CD8-positive, alpha-beta T cell (primary cell): ENCODE measurements at regions of chr4 and their contacts with region 1.

Region 1: GRCh38 chr4:120156120-120156718 is 89.6 kb upstream of the MAD2L1 start:
- DNase-seq: peak in 4 of 9 experiments; percentile 17 to 80 (median 54)
- ATAC-seq: peak; percentile 46
- H3K4me3 ChIP-seq: no peak overlapping the region
- H3K4me3 Mint-ChIP-seq: no peak overlapping the region
- H3K27ac ChIP-seq: no peak overlapping the region
- H3K27ac Mint-ChIP-seq: no peak overlapping the region
- H3K4me1 ChIP-seq: no peaks in the 10 kb centered on the region
- H3K4me1 Mint-ChIP-seq: no peaks in the 10 kb centered on the region
- H3K27me3 ChIP-seq: no peaks in the 10 kb centered on the region
- H3K27me3 Mint-ChIP-seq: no peaks in the 10 kb centered on the region
- CTCF ChIP-seq: peak; percentile 74

Region 2: DNA sequence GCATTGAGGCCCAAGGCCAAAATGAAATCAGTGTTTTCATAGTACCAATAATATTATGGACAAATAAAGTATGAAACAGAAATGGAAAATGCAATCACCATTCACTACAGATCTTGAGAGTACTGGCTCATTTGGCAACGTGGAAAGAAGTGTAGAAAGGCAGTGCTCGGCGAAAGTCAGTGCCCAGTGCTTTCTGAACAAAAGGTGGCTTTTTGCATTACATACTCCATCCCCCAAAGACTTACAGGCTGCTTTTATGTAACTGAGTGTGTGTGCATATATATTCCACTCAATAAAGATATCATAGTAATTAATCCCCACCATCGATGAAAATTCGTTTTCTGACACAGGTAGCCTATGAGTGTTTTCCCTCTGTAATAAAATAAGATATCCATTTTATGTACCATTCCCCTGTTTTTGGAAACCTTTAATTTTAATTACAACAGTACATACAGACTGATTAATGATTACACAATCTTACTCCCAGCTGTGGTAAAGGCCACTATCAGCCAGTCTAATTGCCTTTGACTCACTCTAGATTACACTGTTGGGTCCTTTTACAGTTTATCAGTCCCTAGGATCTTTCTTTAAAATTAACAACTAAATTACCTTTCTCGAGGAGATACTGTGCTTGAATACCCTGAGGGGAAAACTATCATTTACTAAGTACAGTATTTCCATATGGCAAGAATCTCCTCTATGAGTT is 155.5 kb before region 1 on chr4:
- CTCF ChIA-PET with region 1: no interaction called
- POLR2A ChIA-PET with region 1: no interaction called
- intact Hi-C with region 1: no loop called
- DNase-seq: no peak
- ATAC-seq: no peak
- H3K4me3 ChIP-seq: no peak overlapping the region
- H3K4me3 Mint-ChIP-seq: no peak overlapping the region
- H3K27ac ChIP-seq: no peak overlapping the region
- H3K27ac Mint-ChIP-seq: no peak overlapping the region
- H3K4me1 ChIP-seq: no peaks in the 10 kb centered on the region
- H3K4me1 Mint-ChIP-seq: no peaks in the 10 kb centered on the region
- H3K27me3 ChIP-seq: no peaks in the 10 kb centered on the region
- H3K27me3 Mint-ChIP-seq: peaks cover 10% of the 10 kb centered on the region
- CTCF ChIP-seq: no peak

Region 3: DNA sequence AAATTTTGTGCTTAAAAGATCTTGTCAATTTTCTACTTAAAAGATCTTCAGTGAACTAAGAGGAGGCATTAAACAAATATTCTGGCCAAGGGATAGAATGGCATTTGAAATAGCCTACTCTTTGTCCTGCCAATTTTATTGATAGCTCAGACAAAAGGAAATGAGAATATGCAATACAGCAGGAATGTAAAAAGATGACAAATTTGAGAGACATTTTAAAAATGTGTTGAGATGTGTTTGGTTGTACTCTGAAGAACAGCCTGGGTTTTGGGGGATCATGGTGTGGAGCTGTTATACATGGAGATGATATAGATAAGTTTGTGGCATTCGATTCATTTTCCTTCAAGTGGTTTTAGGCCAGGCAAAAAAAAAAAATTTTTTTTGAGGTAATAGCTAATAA is 78.0 kb before region 1 on chr4:
- CTCF ChIA-PET with region 1: no interaction called
- POLR2A ChIA-PET with region 1: no interaction called
- intact Hi-C with region 1: loop called (anchors 5 kb)
- DNase-seq: no peak
- ATAC-seq: no peak
- H3K4me3 ChIP-seq: no peak overlapping the region
- H3K4me3 Mint-ChIP-seq: no peak overlapping the region
- H3K27ac ChIP-seq: no peak overlapping the region
- H3K27ac Mint-ChIP-seq: no peak overlapping the region
- H3K4me1 ChIP-seq: no peaks in the 10 kb centered on the region
- H3K4me1 Mint-ChIP-seq: no peaks in the 10 kb centered on the region
- H3K27me3 ChIP-seq: no peaks in the 10 kb centered on the region
- H3K27me3 Mint-ChIP-seq: peaks cover 3% of the 10 kb centered on the region
- CTCF ChIP-seq: no peak

Region 4: GRCh38 chr4:120175272-120175671 is 19.1 kb after region 1 on chr4:
- CTCF ChIA-PET with region 1: no interaction called
- POLR2A ChIA-PET with region 1: no interaction called
- intact Hi-C with region 1: no loop called
- DNase-seq: no peak
- ATAC-seq: no peak
- H3K4me3 ChIP-seq: no peak overlapping the region
- H3K4me3 Mint-ChIP-seq: no peak overlapping the region
- H3K27ac ChIP-seq: no peak overlapping the region
- H3K27ac Mint-ChIP-seq: no peak overlapping the region
- H3K4me1 ChIP-seq: no peaks in the 10 kb centered on the region
- H3K4me1 Mint-ChIP-seq: no peaks in the 10 kb centered on the region
- H3K27me3 ChIP-seq: no peaks in the 10 kb centered on the region
- H3K27me3 Mint-ChIP-seq: peaks cover 8% of the 10 kb centered on the region
- CTCF ChIP-seq: no peak

Region 5: GRCh38 chr4:121112530-121112929 is 956.3 kb after region 1 on chr4:
- CTCF ChIA-PET with region 1: no interaction called
- POLR2A ChIA-PET with region 1: no interaction called
- intact Hi-C with region 1: loop called in 1 of 2 experiments (anchors 5 kb)
- DNase-seq: peak in 2 of 9 experiments; percentile 6 to 26
- ATAC-seq: no peak
- H3K4me3 ChIP-seq: no peak overlapping the region
- H3K4me3 Mint-ChIP-seq: no peak overlapping the region
- H3K27ac ChIP-seq: no peak overlapping the region
- H3K27ac Mint-ChIP-seq: no peak overlapping the region
- H3K4me1 ChIP-seq: no peaks in the 10 kb centered on the region
- H3K4me1 Mint-ChIP-seq: peaks cover 13% of the 10 kb centered on the region
- H3K27me3 ChIP-seq: no peaks in the 10 kb centered on the region
- H3K27me3 Mint-ChIP-seq: no peaks in the 10 kb centered on the region
- CTCF ChIP-seq: peak; percentile 73

Region 6: GRCh38 chr4:121307445-121308327 is 1151.5 kb after region 1 on chr4:
- CTCF ChIA-PET with region 1: interaction called, 14 read pairs
- POLR2A ChIA-PET with region 1: no interaction called
- intact Hi-C with region 1: loop called (anchors 1 kb)
- DNase-seq: peak in 6 of 9 experiments; percentile 8 to 79 (median 42)
- ATAC-seq: peak; percentile 38
- H3K4me3 ChIP-seq: no peak overlapping the region
- H3K4me3 Mint-ChIP-seq: no peak overlapping the region
- H3K27ac ChIP-seq: no peak overlapping the region
- H3K27ac Mint-ChIP-seq: peak overlapping the region; percentile 38
- H3K4me1 ChIP-seq: peaks cover 4% of the 10 kb centered on the region
- H3K4me1 Mint-ChIP-seq: peaks cover 12% of the 10 kb centered on the region
- H3K27me3 ChIP-seq: no peaks in the 10 kb centered on the region
- H3K27me3 Mint-ChIP-seq: peaks cover 5% of the 10 kb centered on the region
- CTCF ChIP-seq: peak; percentile 89

Region 7: DNA sequence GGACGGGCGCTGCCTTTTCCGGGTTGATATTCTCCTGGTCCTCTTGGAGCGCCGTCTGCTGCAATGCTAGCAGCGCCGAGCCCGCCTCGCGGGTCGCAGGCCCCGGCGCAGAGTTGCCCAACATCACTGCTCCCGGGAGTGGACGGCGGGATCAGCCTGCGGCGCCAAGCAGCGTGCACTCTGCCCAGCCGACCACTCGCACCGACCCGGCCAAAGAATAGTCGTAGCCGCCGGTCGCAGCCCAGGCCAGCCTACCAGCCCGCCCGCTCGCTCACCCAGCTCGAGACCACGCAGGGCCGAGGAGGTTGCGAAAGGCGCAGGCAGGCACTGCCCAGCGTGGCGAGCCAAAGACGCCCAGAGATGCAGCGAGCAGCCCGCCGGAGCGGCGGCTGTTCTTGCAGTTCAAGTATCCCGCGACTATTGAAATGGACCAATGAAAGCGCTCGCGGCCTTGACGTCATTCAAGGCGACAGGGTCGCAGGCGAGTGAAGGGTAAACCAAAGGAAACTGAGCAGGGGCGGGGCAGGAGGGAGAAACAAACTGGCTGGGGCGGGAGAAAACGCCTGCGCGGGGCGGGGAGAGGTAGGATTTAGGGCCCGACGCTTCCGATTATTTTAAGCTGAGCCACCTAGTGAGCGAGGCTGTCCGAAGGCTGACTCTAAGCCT is 1667.4 kb after region 1 on chr4 and contains the start of gene CCNA2:
- CTCF ChIA-PET with region 1: no interaction called
- POLR2A ChIA-PET with region 1: no interaction called
- intact Hi-C with region 1: loop called in 1 of 2 experiments (anchors 10 kb)
- DNase-seq: peak; percentile 90 to 97 (median 95)
- ATAC-seq: peak; percentile 98
- H3K4me3 ChIP-seq: peak within 1 kb of the TSS; percentile 62 to 74
- H3K4me3 Mint-ChIP-seq: peak within 1 kb of the TSS; percentile 91
- H3K27ac ChIP-seq: peak within 1 kb of the TSS; percentile 64 to 77
- H3K27ac Mint-ChIP-seq: peak within 1 kb of the TSS; percentile 86
- H3K4me1 ChIP-seq: peaks cover 8% of the 10 kb centered on the region
- H3K4me1 Mint-ChIP-seq: peaks cover 13% of the 10 kb centered on the region
- H3K27me3 ChIP-seq: no peaks in the 10 kb centered on the region
- H3K27me3 Mint-ChIP-seq: no peaks in the 10 kb centered on the region
- CTCF ChIP-seq: no peak
- total RNA-seq, gene CCNA2: 0.22 to 0.43 TPM